Activated CD4-positive, alpha-beta T cell treated with anti-CD3 and anti-CD28 coated beads for 36 hours (primary cell): ENCODE measurements at regions of chr5 and their contacts with region 1.

Region 1: DNA sequence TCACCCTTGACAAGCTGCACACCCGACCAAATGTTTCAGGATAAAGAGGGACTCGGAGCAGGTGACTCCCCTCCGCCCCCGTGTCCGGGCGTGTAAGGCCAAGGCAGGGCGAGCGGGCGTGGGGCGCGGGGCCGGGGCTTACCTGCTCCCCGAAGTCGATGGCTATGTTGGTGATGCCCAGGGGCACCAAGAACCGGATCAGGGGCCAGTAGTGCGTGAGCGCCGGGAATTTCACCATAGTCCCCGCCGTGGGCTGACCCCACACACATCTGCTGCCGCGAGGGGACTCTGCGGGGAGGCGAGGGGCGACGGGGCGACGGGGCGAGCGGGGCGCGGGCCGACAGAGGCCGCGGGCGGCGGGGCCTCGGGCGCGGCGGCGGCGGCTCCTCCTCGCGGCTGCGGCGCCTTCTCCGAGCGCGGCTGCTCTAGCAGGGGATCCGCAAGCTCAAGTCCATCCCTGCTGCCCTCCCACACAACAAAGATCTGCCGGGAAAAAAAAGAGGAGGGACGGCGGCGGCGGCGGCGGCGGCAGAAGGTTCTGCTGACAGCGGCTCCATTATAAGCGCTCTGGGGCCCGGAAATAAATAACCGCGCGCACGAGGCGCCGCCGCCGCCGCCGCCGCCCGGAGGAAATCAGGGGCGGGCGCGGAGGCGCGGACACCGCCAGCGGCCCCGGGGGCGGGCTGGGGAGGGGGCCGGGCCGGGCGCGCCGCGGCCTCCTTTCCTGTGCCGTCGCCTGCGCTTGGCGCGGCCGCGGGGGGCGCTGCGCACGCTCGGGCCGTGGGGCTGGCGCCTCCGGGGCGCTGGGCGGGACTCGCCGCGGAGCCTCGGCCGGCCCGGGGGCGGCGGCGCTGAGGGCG is at the start of gene ANKH:
- DNase-seq: peak; percentile 89
- ATAC-seq: peak; percentile 80
- H3K4me3 Mint-ChIP-seq: peak within 1 kb of the TSS; percentile 97
- H3K27ac Mint-ChIP-seq: peak within 1 kb of the TSS; percentile 97
- H3K4me1 Mint-ChIP-seq: peaks cover 33% of the 10 kb centered on the region
- H3K27me3 Mint-ChIP-seq: no peaks in the 10 kb centered on the region
- total RNA-seq, gene ANKH: 72.8 to 76.4 TPM

Region 2: GRCh38 chr5:14408969-14409586 is 462.4 kb before region 1 on chr5:
- CTCF ChIA-PET with region 1: interaction called, 3 read pairs
- POLR2A ChIA-PET with region 1: no interaction called
- intact Hi-C with region 1: loop called in 1 of 2 experiments (anchors 5 kb)
- DNase-seq: no peak
- ATAC-seq: no peak
- H3K4me3 Mint-ChIP-seq: no peak overlapping the region
- H3K27ac Mint-ChIP-seq: no peak overlapping the region
- H3K4me1 Mint-ChIP-seq: peaks cover 14% of the 10 kb centered on the region
- H3K27me3 Mint-ChIP-seq: no peaks in the 10 kb centered on the region

Region 3: GRCh38 chr5:14664302-14665100 is 206.9 kb before region 1 on chr5 and contains the start of gene OTULIN:
- CTCF ChIA-PET with region 1: no interaction called
- POLR2A ChIA-PET with region 1: no interaction called
- intact Hi-C with region 1: loop called (anchors 1 to 5 kb)
- DNase-seq: peak; percentile 93
- ATAC-seq: peak; percentile 83
- H3K4me3 Mint-ChIP-seq: peak within 1 kb of the TSS; percentile 95
- H3K27ac Mint-ChIP-seq: peak within 1 kb of the TSS; percentile 97
- H3K4me1 Mint-ChIP-seq: peaks cover 68% of the 10 kb centered on the region
- H3K27me3 Mint-ChIP-seq: no peaks in the 10 kb centered on the region
- total RNA-seq, gene OTULIN: 48.0 to 48.2 TPM

Region 4: DNA sequence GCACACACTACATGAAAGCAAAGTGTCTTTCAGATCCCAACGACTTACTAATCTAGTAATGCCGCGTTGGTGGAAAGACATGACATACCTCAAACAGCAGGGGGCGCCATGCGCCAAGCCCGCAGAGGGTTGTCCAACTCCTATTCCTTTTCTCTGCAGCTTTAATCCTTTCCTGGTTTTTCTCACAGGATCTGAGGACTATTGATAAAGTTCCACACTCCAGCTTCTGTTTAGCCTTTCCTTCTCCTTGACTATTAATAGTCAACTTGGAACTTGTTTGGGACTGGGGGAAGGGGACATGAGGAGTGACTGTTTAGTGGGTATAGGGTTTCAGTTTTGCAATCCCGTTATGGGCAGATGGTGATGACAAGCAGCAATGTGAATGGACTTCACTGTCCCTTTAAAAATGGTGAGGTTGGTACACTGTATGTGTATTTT is 144.0 kb before region 1 on chr5:
- CTCF ChIA-PET with region 1: interaction called, 12 read pairs
- POLR2A ChIA-PET with region 1: no interaction called
- intact Hi-C with region 1: loop called (anchors 1 kb)
- DNase-seq: peak; percentile 87
- ATAC-seq: peak; percentile 51
- H3K4me3 Mint-ChIP-seq: no peak overlapping the region
- H3K27ac Mint-ChIP-seq: no peak overlapping the region
- H3K4me1 Mint-ChIP-seq: peaks cover 15% of the 10 kb centered on the region
- H3K27me3 Mint-ChIP-seq: no peaks in the 10 kb centered on the region

Region 5: DNA sequence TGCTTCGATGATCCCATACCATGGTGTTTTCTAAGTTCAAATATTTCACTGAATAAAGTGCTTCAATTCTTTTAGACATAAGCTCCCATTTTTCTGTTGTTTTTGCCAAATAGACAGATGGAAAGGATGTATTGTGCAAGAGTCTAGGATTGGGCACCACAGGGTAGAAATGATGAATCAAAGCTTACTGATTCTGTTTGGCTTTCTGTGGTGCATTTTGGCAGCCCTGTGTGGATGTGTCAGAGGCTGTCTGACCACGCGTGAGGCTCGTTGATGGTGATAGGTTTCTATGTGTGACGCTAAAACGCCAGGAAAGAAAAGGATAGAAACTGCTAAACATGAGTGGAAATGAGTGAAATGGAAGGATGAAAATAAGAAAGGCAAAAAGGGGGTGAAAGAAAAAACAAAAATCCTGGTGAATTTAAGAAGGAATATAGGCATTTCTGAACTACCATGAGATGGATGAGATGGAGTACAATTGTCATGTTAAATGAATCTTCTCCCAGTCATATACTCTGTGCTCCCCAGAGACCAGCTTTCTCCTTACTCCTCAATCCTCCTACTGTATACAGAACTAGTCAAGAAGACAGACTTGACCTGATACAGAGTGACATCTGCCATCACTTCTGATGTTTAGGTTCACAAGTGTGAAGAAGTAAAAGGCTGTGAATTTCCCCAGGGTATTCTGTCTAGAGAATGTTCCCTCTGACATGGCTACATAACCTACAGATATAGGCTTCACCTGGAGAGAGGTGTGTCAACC is 54.3 kb before region 1 on chr5:
- CTCF ChIA-PET with region 1: interaction called, 3 read pairs
- POLR2A ChIA-PET with region 1: no interaction called
- intact Hi-C with region 1: loop called in 1 of 2 experiments (anchors 2 kb)
- DNase-seq: peak; percentile 76
- ATAC-seq: peak; percentile 87
- H3K4me3 Mint-ChIP-seq: peak overlapping the region; percentile 1
- H3K27ac Mint-ChIP-seq: peak overlapping the region; percentile 75
- H3K4me1 Mint-ChIP-seq: peaks cover 83% of the 10 kb centered on the region
- H3K27me3 Mint-ChIP-seq: no peaks in the 10 kb centered on the region

Region 6: DNA sequence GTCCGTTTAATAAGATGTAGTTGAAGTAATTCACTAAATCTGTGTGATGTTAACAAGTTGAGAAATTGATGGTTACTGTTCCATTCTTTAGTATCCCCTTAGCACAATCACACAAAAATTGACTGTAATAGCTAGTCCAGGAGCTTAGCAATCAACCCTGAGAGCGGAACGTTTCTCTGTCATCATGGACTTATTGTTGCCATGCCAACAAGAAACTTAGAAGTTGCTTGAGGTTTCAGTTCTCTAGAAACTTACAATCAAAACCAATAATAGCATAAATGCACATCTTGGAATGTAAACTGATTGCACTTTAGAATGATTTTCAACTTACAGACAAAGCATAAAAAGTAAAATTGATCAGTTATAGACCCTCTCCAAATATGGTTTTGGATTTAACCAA is 125.6 kb after region 1 on chr5:
- CTCF ChIA-PET with region 1: interaction called, 6 read pairs
- POLR2A ChIA-PET with region 1: interaction called, 3 read pairs
- intact Hi-C with region 1: loop called (anchors 1 to 2 kb)
- DNase-seq: no peak
- ATAC-seq: no peak
- H3K4me3 Mint-ChIP-seq: no peak overlapping the region
- H3K27ac Mint-ChIP-seq: no peak overlapping the region
- H3K4me1 Mint-ChIP-seq: peaks cover 20% of the 10 kb centered on the region
- H3K27me3 Mint-ChIP-seq: no peaks in the 10 kb centered on the region

Region 7: DNA sequence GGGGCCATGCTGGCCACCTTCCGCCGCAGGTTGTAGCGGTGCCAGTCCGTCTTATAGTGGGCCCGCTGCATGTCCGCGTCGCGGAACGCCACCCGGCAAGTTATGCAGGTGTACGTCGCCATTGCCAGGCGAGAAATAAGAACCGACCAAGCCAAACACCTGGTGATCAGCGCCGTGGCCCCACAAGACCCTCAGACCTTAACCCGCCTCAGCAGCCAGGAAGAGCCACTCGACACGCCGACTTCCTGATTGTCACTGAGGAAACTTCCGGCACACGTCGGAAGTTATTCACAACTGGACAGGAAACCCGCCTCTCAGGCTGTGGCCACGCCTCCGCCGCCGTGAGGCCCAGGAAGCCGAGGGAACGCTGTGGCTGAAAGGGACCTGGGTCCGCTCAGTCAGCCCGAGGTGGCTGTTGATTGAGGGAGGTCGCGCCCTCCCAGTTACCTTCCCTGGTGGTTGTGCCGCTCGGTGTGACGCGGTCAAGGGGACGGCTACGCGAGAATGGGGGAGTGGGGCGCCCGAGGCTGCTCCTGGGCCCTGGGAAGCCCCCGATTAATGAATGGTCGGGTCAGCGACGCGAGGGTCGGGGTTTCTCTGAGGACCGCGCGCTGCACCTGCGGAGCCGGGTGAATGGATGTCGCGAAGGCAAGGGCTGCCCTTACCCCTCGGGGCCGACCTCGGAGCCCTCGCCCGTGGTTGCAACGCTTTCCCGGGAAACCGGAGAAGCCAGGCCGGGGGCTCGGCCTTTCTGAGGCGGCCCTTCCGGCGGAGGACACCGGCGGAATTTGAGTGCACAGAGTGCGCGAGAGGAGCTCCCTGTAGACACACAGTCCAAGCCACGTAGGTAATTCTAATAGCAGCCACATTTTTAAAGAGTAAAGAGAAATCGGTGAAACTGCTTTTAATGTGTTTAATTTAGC is 1594.4 kb after region 1 on chr5 and contains the start of gene ZNF622:
- CTCF ChIA-PET with region 1: no interaction called
- POLR2A ChIA-PET with region 1: no interaction called
- intact Hi-C with region 1: loop called in 1 of 2 experiments (anchors 5 kb)
- DNase-seq: peak; percentile 92
- ATAC-seq: peak; percentile 80
- H3K4me3 Mint-ChIP-seq: peak within 1 kb of the TSS; percentile 99
- H3K27ac Mint-ChIP-seq: peak within 1 kb of the TSS; percentile 98
- H3K4me1 Mint-ChIP-seq: peaks cover 67% of the 10 kb centered on the region
- H3K27me3 Mint-ChIP-seq: no peaks in the 10 kb centered on the region
- total RNA-seq, gene ZNF622: 30.9 to 36.3 TPM